ENCODE measurements at regions of chr12 and their contacts with region 1.

Region 1: GRCh38 chr12:108826101-108826806 is 31.1 kb downstream of the SSH1 start:
- DNase-seq: peak; percentile 79
- H3K4me3 ChIP-seq: peak overlapping the region; percentile 1 to 37; a peak in 3 of 4 replicates
- H3K27ac ChIP-seq: peak overlapping the region; percentile 99 to 100
- H3K4me1 ChIP-seq: peaks cover 54 to 74% of the 10 kb centered on the region in 2 experiments
- H3K27me3 ChIP-seq: no peaks in the 10 kb centered on the region
- CTCF ChIP-seq: no peak; the same call in 1 of the 2 replicates
- EP300 ChIP-seq: peak; percentile 10 to 68; a peak in 3 of 4 replicates
- RAD21 ChIP-seq: no peak; the same call in 1 of the 2 replicates

Region 2: DNA sequence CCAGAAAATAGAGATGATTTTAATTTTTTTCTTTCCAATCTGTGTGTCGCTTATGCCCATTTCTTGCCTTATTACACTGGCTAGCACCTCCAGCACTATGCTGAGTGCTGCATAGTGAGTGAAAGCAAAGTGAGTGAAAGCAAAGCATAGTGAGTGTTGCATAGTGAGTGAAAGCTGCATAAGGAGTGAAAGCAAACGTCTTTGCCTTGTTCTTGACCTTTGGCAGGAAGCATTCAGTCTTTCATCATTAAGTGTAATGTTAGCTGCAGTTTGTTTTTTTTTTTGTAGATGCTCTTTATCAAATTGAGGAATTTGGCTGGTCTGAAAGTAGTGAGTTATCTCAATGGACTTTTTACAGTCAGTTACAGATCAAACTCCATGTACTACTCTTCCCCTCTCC is 88.1 kb before region 1 on chr12:
- CTCF ChIA-PET with region 1: no interaction called
- POLR2A ChIA-PET with region 1: no interaction called
- DNase-seq: no peak
- H3K4me3 ChIP-seq: no peak overlapping the region
- H3K27ac ChIP-seq: no peak overlapping the region
- H3K4me1 ChIP-seq: peaks cover 0 to 12% of the 10 kb centered on the region in 2 experiments; a peak in 1 of 4 replicates
- H3K27me3 ChIP-seq: no peaks in the 10 kb centered on the region
- CTCF ChIP-seq: no peak
- EP300 ChIP-seq: no peak
- RAD21 ChIP-seq: no peak

Region 3: DNA sequence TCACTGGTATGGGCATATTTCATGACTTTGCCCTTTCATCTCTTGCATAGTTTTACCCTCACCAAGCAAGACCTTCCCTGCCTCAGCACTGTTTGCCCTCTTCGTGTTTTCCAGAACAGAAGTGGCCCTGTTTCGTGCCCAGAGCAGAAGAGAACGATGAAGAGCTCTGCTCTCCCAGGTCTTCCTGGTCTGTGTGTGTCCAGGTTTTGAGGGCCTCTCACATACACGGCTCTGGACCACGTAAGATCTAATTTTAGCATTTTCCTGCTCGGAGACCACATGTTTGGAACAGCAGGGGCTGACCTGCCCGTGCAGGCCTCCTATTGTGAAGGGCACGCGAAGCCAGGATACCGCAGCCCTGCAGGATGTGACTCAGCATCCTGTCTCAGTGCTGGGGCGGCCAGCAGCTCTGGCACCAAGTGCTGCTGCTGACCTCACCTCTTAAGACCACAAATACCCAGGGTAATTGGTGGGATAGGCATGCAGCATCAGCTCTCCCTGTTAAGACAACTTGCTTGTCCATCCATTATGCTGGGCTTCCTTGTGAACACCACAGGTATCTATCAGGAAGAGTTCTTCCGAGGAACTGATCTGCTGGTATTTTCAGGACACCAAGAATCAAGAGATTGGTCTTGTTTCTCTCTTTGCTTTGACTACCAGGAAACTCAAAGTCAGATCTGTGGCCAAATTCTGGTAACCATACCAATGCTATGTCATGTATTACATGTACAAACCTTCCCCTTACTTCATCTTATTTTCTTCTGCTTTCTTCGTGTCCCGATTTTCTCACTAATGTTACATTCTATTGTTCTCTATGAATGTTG is 12.2 kb after region 1 on chr12:
- CTCF ChIA-PET with region 1: interaction called, 4 read pairs
- POLR2A ChIA-PET with region 1: interaction called, 13 read pairs
- DNase-seq: peak; percentile 64
- H3K4me3 ChIP-seq: no peak overlapping the region
- H3K27ac ChIP-seq: peak overlapping the region; percentile 98 to 100
- H3K4me1 ChIP-seq: peaks cover 36 to 63% of the 10 kb centered on the region in 2 experiments
- H3K27me3 ChIP-seq: no peaks in the 10 kb centered on the region
- CTCF ChIP-seq: no peak
- EP300 ChIP-seq: peak; percentile 79 to 99
- RAD21 ChIP-seq: no peak

Region 4: GRCh38 chr12:108856428-108857157 is 30.3 kb after region 1 on chr12:
- CTCF ChIA-PET with region 1: interaction called, 3 read pairs
- POLR2A ChIA-PET with region 1: interaction called, 10 read pairs
- DNase-seq: peak; percentile 51
- H3K4me3 ChIP-seq: peak overlapping the region; percentile 81 to 84
- H3K27ac ChIP-seq: peak overlapping the region; percentile 67 to 99
- H3K4me1 ChIP-seq: peaks cover 22 to 25% of the 10 kb centered on the region in 2 experiments
- H3K27me3 ChIP-seq: no peaks in the 10 kb centered on the region
- CTCF ChIP-seq: no peak
- EP300 ChIP-seq: no peak
- RAD21 ChIP-seq: no peak

Measured in SK-N-SH (cell line).